ENCODE measurements at regions of chr12 and their contacts with region 1.

Region 1: GRCh38 chr12:1939801-1940607 is 21.6 kb upstream of the CACNA2D4 start:
- DNase-seq: peak in 1 of 2 donors; percentile 77
- H3K4me3 ChIP-seq: peak overlapping the region in 1 of 2 donors; percentile 13
- H3K27ac ChIP-seq: peak overlapping the region; percentile 46
- H3K4me1 ChIP-seq: peaks cover 26% of the 10 kb centered on the region
- H3K27me3 ChIP-seq: no peaks in the 10 kb centered on the region
- CTCF ChIP-seq: peak; percentile 91 to 95 (median 92)
- POLR2A ChIP-seq: no peak

Region 2: GRCh38 chr12:1644534-1645438 is 295.2 kb before region 1 on chr12:
- intact Hi-C with region 1: no loop called
- DNase-seq: no peak
- H3K4me3 ChIP-seq: no peak overlapping the region
- H3K27ac ChIP-seq: no peak overlapping the region
- H3K4me1 ChIP-seq: peaks cover 14% of the 10 kb centered on the region
- H3K27me3 ChIP-seq: no peaks in the 10 kb centered on the region
- CTCF ChIP-seq: no peak
- POLR2A ChIP-seq: no peak

Region 3: DNA sequence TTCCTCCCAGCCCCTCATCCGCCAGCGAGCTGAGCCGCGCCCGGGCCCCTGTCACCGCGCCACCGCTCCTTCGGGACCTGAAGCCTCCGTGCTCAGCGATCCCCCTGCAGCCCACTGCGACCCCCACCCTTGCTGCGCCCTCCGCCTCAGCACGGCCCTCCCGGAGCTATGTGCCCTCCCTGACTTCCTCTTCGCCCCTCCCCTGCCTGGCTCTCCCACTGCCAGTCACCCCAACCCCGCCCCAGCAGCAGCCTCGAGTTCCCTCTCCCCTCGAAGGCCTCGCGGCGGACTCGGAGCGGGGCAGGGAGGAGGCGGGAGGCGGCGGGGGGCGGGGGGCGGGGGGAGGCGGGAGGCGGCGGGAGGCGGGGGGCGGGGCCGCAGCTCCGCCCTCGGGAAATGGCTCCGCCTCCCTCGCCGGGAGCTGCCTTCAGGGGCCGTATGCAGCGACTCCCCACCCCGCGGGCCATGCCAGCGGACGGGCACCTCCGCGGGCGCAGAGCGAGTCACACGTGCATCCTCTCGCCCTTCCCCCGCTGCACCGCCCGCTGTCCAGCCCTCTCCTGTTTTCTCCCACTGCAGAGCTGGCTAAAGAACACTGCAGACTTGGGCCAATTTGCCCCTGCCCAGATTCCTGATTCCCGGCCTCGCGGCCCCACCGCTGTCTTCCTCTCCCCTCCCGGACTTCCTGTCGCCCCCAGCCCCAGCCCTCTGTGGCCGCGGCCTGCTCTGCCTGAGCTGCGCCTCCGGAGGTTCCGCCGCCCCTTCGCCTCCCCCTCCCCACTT is 278.3 kb before region 1 on chr12:
- intact Hi-C with region 1: loop called (anchors 10 kb)
- DNase-seq: no peak
- H3K4me3 ChIP-seq: peak overlapping the region; percentile 48 to 61
- H3K27ac ChIP-seq: peak overlapping the region; percentile 97
- H3K4me1 ChIP-seq: peaks cover 28% of the 10 kb centered on the region
- H3K27me3 ChIP-seq: no peaks in the 10 kb centered on the region
- CTCF ChIP-seq: no peak
- POLR2A ChIP-seq: peak in 1 of 2 donors; percentile 35

Region 4: GRCh38 chr12:1795785-1796514 is 144.1 kb before region 1 on chr12:
- intact Hi-C with region 1: loop called (anchors 2 kb)
- DNase-seq: peak; percentile 90 to 96
- H3K4me3 ChIP-seq: peak overlapping the region; percentile 52 to 65
- H3K27ac ChIP-seq: peak overlapping the region; percentile 77
- H3K4me1 ChIP-seq: peaks cover 23% of the 10 kb centered on the region
- H3K27me3 ChIP-seq: no peaks in the 10 kb centered on the region
- CTCF ChIP-seq: peak; percentile 98 to 99 (median 99)
- POLR2A ChIP-seq: peak in 1 of 2 donors; percentile 53

Region 5: GRCh38 chr12:2034633-2035430 is 94.8 kb after region 1 on chr12:
- intact Hi-C with region 1: loop called (anchors 10 kb)
- DNase-seq: no peak
- H3K4me3 ChIP-seq: peak overlapping the region; percentile 30 to 39
- H3K27ac ChIP-seq: no peak overlapping the region
- H3K4me1 ChIP-seq: peaks cover 11% of the 10 kb centered on the region
- H3K27me3 ChIP-seq: no peaks in the 10 kb centered on the region
- CTCF ChIP-seq: peak; percentile 83 to 89 (median 88)
- POLR2A ChIP-seq: no peak

Region 6: DNA sequence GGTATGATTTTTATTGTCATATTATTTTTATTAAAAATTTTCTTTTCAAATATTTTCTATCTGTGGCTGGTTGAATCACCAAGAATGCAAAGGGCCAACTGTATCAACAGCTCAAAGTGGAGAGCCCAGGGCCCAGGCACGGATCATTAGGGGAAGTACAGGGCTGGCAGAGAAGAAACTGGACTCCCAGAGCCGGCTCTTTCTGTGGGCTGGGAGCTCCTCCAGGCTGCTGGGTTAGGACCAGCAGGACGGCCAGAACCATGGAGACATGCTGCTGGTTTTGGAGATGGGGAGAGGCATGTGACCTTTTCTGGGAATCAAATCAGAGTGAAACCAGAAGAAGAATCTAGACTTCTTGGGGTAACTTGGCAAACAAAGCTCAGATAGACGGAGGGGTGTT is 333.3 kb after region 1 on chr12:
- intact Hi-C with region 1: loop called (anchors 10 kb)
- DNase-seq: no peak
- H3K4me3 ChIP-seq: no peak overlapping the region
- H3K27ac ChIP-seq: no peak overlapping the region
- H3K4me1 ChIP-seq: peaks cover 7% of the 10 kb centered on the region
- H3K27me3 ChIP-seq: no peaks in the 10 kb centered on the region
- CTCF ChIP-seq: no peak
- POLR2A ChIP-seq: no peak